ENCODE measurements at regions of chr20 and their contacts with region 1.

Region 1: GRCh38 chr20:12217382-12217781 is 299.7 kb downstream of the BTBD3 start:
- DNase-seq: no peak
- ATAC-seq: no peak
- H3K4me3 ChIP-seq: no peak overlapping the region
- H3K27ac ChIP-seq: no peak overlapping the region
- H3K4me1 ChIP-seq: no peaks in the 10 kb centered on the region
- H3K27me3 ChIP-seq: no peaks in the 10 kb centered on the region
- CTCF ChIP-seq: no peak

Region 2: DNA sequence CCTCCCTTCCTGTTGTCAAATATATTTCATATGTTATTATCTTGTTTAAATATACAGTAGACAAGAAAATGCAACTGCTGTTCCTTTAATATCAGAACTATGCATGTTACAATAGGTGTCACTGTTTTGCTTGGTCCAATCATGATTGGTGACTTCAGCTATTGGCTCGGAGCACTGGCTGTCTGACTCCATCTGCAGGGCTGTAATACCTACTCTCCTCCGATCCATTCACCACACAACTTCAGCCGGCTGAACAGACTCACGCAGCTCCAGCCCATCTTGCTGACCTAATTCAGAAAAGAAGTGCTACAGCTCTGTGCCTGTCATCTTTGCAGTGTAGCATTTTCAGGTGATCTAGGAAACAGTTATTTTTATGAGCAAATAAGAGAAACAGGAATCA is 299.7 kb before region 1 on chr20 and contains the start of gene BTBD3:
- intact Hi-C with region 1: no loop called
- DNase-seq: peak; percentile 66 to 82 (median 75)
- ATAC-seq: peak; percentile 91 to 98 (median 94)
- H3K4me3 ChIP-seq: peak within 1 kb of the TSS in 3 of 4 donors; percentile 2 to 37 (median 33)
- H3K27ac ChIP-seq: peak within 1 kb of the TSS; percentile 34 to 78 (median 66)
- H3K4me1 ChIP-seq: peaks cover 0 to 18% (median 17%) of the 10 kb centered on the region in 3 donors
- H3K27me3 ChIP-seq: no peaks in the 10 kb centered on the region
- CTCF ChIP-seq: no peak
- total RNA-seq, gene BTBD3: 15.0 to 21.4 (median 17.2) TPM

Region 3: DNA sequence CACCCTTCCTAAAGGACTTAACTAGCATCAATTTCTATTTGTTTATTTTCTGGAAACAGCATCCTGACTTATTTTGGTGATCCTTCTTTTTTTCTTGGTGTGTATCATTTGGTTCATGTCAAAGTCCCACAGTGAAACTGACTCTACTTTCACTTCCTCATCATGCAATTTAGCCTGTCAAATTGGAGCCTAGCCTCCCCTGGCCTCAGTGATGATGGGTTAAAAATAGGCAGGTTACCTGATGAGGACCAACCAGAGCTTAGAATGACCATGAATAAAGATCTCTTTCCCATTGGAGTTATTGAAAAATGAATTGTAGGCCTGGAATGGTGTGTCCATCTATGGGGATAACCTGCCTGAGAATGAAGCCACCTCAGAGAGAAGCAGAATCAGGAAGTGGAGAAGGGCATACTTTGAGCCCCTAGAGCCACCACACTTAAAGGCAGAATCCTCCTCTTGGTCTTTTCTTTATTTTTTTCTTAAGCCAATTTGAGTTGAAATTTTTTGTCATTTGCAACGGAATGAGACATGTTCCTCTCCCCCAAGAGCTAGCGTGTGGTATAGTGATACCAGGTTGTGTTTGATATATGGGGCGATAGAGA is 194.1 kb before region 1 on chr20:
- intact Hi-C with region 1: loop called in 1 of 3 experiments (anchors 10 kb)
- DNase-seq: no peak
- ATAC-seq: no peak
- H3K4me3 ChIP-seq: no peak overlapping the region
- H3K27ac ChIP-seq: no peak overlapping the region
- H3K4me1 ChIP-seq: no peaks in the 10 kb centered on the region
- H3K27me3 ChIP-seq: no peaks in the 10 kb centered on the region
- CTCF ChIP-seq: no peak

Region 4: DNA sequence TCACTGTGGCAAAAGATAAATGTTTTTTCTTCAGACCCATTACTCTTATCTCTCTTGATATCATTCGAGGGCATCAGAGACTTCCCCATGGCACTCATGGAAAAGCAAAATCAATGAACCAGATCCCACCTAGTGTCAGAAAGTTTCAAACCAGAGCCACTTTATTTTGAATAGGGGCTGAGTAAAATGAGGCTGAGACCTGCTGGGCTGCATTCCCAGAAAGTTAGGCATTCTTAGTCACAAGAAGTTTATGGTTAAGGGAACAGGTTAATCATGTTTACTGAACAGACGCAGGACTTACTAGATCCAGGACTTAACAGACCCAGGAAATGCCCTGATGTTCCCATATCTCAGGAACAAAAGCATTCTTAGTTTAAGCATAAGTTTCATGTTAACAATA is 70.2 kb after region 1 on chr20:
- intact Hi-C with region 1: no loop called
- DNase-seq: no peak
- ATAC-seq: peak in 3 of 4 donors; percentile 55 to 64 (median 63)
- H3K4me3 ChIP-seq: no peak overlapping the region
- H3K27ac ChIP-seq: peak overlapping the region in 1 of 4 donors; percentile 9
- H3K4me1 ChIP-seq: no peaks in the 10 kb centered on the region
- H3K27me3 ChIP-seq: no peaks in the 10 kb centered on the region
- CTCF ChIP-seq: no peak